ENCODE measurements at regions of chr7 and their contacts with region 1.

Region 1: GRCh38 chr7:106056513-106057203 is 55.5 kb downstream of the SYPL1 start:
- DNase-seq: peak; percentile 84
- ATAC-seq: peak; percentile 97
- H3K4me3 Mint-ChIP-seq: no peak overlapping the region
- H3K27ac Mint-ChIP-seq: no peak overlapping the region
- H3K4me1 Mint-ChIP-seq: peaks cover 16% of the 10 kb centered on the region
- H3K27me3 Mint-ChIP-seq: no peaks in the 10 kb centered on the region

Region 2: GRCh38 chr7:106071356-106071998 is 14.8 kb after region 1 on chr7:
- CTCF ChIA-PET with region 1: interaction called, 15 read pairs
- POLR2A ChIA-PET with region 1: interaction called, 4 read pairs
- intact Hi-C with region 1: no loop called
- DNase-seq: peak; percentile 71
- ATAC-seq: peak; percentile 98
- H3K4me3 Mint-ChIP-seq: peak overlapping the region; percentile 60
- H3K27ac Mint-ChIP-seq: peak overlapping the region; percentile 95
- H3K4me1 Mint-ChIP-seq: peaks cover 35% of the 10 kb centered on the region
- H3K27me3 Mint-ChIP-seq: no peaks in the 10 kb centered on the region

Region 3: DNA sequence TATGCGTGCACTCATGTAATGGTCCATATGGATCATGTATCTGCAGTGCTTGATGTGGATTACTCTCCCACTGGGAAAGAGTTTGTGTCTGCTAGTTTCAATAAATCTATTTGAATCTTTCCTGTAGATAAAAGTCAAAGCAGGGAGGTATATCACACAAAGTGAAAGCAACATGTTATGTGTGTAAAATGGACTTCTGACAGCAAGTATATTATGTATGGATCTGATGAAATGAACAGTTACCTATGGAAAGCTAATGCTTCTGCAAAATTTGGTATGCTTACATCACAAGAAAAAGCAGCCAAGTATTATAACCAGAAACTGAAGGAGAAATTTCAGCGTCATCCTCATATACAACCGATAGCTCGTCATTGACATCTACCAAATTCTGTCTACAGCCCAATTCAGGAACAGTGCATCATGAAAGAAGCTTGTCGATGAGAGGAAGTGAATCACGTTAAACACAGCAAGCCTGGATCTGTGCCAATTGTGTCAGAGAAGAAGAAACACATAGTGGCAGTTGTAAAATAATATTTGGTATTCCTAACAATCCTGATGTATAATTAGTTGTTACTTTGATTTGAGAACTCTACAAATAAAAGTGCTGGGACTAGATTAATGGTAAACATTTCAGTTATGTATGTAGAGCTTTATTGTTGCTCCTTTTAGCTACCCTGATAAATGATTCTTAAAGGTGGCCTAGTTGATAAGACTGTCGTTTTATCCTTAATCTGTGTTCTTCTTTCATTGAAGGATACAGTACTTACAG is 69.7 kb after region 1 on chr7:
- CTCF ChIA-PET with region 1: interaction called, 4 read pairs
- POLR2A ChIA-PET with region 1: no interaction called
- intact Hi-C with region 1: loop called in 1 of 2 experiments (anchors 1 kb)
- DNase-seq: peak; percentile 72
- ATAC-seq: peak; percentile 93
- H3K4me3 Mint-ChIP-seq: peak overlapping the region; percentile 61
- H3K27ac Mint-ChIP-seq: peak overlapping the region; percentile 38
- H3K4me1 Mint-ChIP-seq: peaks cover 16% of the 10 kb centered on the region
- H3K27me3 Mint-ChIP-seq: peaks cover 2% of the 10 kb centered on the region

Region 4: DNA sequence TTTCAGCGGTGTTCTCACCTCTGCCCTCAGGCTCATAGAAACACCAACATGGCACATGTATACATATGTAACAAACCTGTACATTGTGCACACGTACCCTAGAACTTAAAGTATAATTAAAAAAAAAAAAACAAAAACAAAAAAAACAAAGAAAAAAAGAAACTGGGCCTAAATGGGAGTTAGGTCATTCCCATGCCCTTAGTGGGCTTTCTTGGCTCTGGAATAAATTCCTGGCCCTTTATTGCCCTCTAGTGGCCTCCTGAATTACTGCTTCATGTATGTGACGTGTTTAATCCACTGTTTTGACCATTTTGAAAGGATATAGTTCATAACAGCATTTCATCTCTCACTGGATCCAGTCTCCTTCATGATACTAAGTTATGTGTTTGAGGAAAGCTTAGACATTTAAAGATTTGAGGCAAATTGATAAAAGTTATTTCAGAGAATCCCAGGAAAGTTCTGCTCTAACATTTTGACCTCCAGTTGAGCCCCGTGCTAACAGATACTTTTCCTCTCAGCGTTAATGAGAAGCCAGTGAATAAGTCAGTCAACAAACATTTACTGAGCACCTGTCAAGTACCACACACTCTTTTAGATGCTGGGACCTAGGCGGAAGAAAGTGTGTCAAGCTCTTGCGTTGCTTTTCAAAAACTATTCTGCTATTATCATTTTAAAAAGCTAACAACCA is 110.1 kb after region 1 on chr7:
- CTCF ChIA-PET with region 1: interaction called, 59 read pairs
- POLR2A ChIA-PET with region 1: no interaction called
- intact Hi-C with region 1: loop called (anchors 1 kb)
- DNase-seq: peak; percentile 53
- ATAC-seq: peak; percentile 30
- H3K4me3 Mint-ChIP-seq: no peak overlapping the region
- H3K27ac Mint-ChIP-seq: no peak overlapping the region
- H3K4me1 Mint-ChIP-seq: no peaks in the 10 kb centered on the region
- H3K27me3 Mint-ChIP-seq: peaks cover 4% of the 10 kb centered on the region

Measured in activated CD4-positive, alpha-beta T cell treated with anti-CD3 and anti-CD28 coated beads for 36 hours (primary cell).